ENCODE measurements at regions of chr3 and their contacts with region 1.

Region 1: GRCh38 chr3:8555113-8555661 is 53.6 kb downstream of the LMCD1 start:
- DNase-seq: peak in 4 of 5 donors; percentile 40 to 80 (median 43)
- ATAC-seq: peak in 3 of 4 donors; percentile 22 to 39 (median 32)
- H3K4me3 ChIP-seq: no peak overlapping the region
- H3K27ac ChIP-seq: peak overlapping the region in 11 of 12 donors; percentile 0 to 76 (median 52)
- H3K4me1 ChIP-seq: peaks cover 6 to 97% (median 49%) of the 10 kb centered on the region in 12 donors
- H3K27me3 ChIP-seq: no peaks in the 10 kb centered on the region
- CTCF ChIP-seq: no peak
- POLR2A ChIP-seq: no peak

Region 2: DNA sequence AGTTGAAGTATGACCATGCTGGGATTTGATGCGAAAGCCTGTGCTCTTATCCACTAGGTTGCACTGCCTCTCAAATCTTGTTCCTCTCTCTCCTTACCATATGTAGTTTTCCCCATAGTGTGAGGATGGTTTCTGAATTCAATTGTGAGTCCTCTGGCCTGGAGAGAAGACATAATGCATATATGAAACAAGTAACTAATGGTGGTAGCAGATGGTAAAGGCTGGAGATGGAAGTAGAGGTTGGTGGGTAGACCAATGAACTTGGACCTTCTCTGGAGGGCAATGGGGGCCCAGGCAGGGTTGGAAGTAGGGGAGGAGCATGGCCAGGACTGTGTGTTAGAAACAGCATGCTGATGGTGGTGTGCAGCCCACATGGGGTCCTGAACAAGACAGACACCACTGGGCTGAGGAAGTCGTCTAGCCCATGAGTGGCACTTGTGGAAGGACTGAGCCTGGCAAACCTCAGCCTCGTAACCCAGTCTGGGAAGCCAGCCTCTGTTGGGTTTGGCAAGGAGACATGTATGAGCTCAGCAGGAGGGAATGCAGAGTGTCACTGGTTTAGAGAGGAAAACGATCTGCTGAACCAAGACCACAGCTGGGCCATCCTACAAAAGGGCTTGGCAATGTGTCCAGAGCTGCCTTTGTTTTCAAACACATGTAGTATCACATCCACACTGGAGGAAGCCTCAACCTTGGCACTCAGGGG is 72.1 kb before region 1 on chr3:
- intact Hi-C with region 1: no loop called
- DNase-seq: peak; percentile 72 to 86 (median 76)
- ATAC-seq: peak; percentile 87 to 94 (median 93)
- H3K4me3 ChIP-seq: no peak overlapping the region
- H3K27ac ChIP-seq: peak overlapping the region; percentile 7 to 75 (median 52)
- H3K4me1 ChIP-seq: peaks cover 0 to 50% (median 27%) of the 10 kb centered on the region in 12 donors
- H3K27me3 ChIP-seq: no peaks in the 10 kb centered on the region
- CTCF ChIP-seq: no peak
- POLR2A ChIP-seq: no peak

Region 3: GRCh38 chr3:8501371-8502131 is 53.6 kb before region 1 on chr3 and contains the start of gene LMCD1:
- intact Hi-C with region 1: loop called in 2 of 10 experiments (anchors 5 kb)
- DNase-seq: peak; percentile 97 to 98 (median 98)
- ATAC-seq: peak; percentile 97 to 99 (median 98)
- H3K4me3 ChIP-seq: peak within 1 kb of the TSS; percentile 35 to 73 (median 58)
- H3K27ac ChIP-seq: peak within 1 kb of the TSS; percentile 82 to 97 (median 93)
- H3K4me1 ChIP-seq: peaks cover 5 to 79% (median 58%) of the 10 kb centered on the region in 12 donors
- H3K27me3 ChIP-seq: no peaks in the 10 kb centered on the region
- CTCF ChIP-seq: peak in 9 of 12 donors; percentile 8 to 52 (median 37)
- POLR2A ChIP-seq: peak in 1 of 2 donors; percentile 89
- total RNA-seq, gene LMCD1: 36.8 to 382 (median 54.6) TPM

Region 4: DNA sequence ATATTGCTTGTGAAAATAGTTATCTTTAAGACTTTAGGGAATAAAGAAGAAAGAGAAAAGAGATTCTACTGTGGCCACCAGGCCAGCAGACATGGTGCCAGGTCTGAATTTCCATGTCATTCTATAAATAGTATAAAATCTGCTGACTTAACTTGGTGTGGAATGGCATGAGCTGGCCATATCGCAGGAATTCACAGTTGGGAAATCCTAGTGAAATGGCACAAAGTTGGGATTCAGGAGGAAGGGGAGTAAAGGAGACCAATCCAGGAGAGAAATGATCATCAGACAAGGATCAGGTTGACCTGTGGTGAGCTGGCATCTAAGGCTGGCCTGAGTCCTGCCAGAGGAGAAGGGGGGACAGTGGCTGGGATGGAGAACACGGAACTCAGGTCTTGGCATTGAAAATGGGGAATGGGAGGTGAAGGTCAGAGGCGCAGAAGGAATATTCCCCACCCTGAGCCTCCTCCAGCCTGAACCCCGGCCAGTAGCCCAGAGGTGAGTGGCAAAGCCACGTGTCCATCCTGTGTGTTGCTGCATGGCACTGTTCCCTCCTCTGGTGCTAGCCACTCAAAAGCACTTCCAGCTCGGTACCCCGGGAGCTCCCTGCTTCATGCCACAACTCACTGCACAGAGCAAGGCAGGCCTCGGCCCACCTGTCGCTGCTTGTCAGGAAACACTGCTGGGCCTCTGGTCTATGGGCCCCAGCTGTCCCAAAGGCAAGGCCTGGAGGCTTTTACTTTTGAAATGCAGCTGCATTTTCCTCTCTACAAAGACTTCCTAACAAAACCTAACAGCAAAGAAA is 38.0 kb after region 1 on chr3:
- intact Hi-C with region 1: no loop called
- DNase-seq: peak in 1 of 5 donors; percentile 38
- ATAC-seq: peak; percentile 51 to 82 (median 66)
- H3K4me3 ChIP-seq: no peak overlapping the region
- H3K27ac ChIP-seq: peak overlapping the region in 8 of 12 donors; percentile 24 to 80 (median 50)
- H3K4me1 ChIP-seq: peaks cover 0 to 40% (median 13%) of the 10 kb centered on the region in 12 donors
- H3K27me3 ChIP-seq: no peaks in the 10 kb centered on the region
- CTCF ChIP-seq: no peak
- POLR2A ChIP-seq: no peak

Region 5: DNA sequence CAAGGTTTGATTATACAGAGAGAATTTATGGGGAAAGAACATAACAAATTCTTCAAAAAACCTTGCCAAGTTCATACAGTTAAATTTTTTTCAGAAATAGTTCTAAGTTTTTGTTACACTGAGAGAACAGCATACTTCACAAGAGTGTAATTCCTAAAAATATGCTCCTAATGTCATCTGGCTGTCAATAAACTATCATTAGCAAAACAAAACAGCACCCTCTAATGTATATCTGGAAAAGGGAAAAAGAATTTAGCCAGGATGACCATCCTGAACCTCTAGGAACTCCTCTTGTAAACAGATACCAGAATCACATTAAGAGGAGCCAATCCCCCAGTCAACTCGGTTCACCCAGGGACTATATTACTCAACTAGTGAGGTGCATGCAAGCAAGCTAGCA is 344.8 kb after region 1 on chr3:
- intact Hi-C with region 1: no loop called
- DNase-seq: no peak
- ATAC-seq: no peak
- H3K4me3 ChIP-seq: no peak overlapping the region
- H3K27ac ChIP-seq: no peak overlapping the region
- H3K4me1 ChIP-seq: peaks cover 0 to 5% (median 0%) of the 10 kb centered on the region in 12 donors
- H3K27me3 ChIP-seq: no peaks in the 10 kb centered on the region
- CTCF ChIP-seq: no peak
- POLR2A ChIP-seq: no peak